ENCODE measurements at regions of chr11 and their contacts with region 1.

Region 1: GRCh38 chr11:59053387-59053786 is 32.7 kb upstream of the GLYATL1B start:
- DNase-seq: peak; percentile 68 to 88 (median 76)
- ATAC-seq: peak; percentile 68
- H3K4me3 ChIP-seq: no peak overlapping the region
- H3K4me3 Mint-ChIP-seq: no peak overlapping the region
- H3K27ac ChIP-seq: no peak overlapping the region
- H3K27ac Mint-ChIP-seq: no peak overlapping the region
- H3K4me1 ChIP-seq: peaks cover 6% of the 10 kb centered on the region
- H3K4me1 Mint-ChIP-seq: peaks cover 7% of the 10 kb centered on the region
- H3K27me3 ChIP-seq: no peaks in the 10 kb centered on the region
- H3K27me3 Mint-ChIP-seq: peaks cover 28% of the 10 kb centered on the region
- CTCF ChIP-seq: peak; percentile 78

Region 2: GRCh38 chr11:58654079-58654907 is 399.1 kb before region 1 on chr11:
- CTCF ChIA-PET with region 1: no interaction called
- POLR2A ChIA-PET with region 1: no interaction called
- intact Hi-C with region 1: loop called in 1 of 2 experiments (anchors 10 kb)
- DNase-seq: peak; percentile 64 to 86 (median 70)
- ATAC-seq: peak; percentile 99
- H3K4me3 ChIP-seq: no peak overlapping the region
- H3K4me3 Mint-ChIP-seq: no peak overlapping the region
- H3K27ac ChIP-seq: no peak overlapping the region
- H3K27ac Mint-ChIP-seq: no peak overlapping the region
- H3K4me1 ChIP-seq: peaks cover 3% of the 10 kb centered on the region
- H3K4me1 Mint-ChIP-seq: peaks cover 7% of the 10 kb centered on the region
- H3K27me3 ChIP-seq: no peaks in the 10 kb centered on the region
- H3K27me3 Mint-ChIP-seq: no peaks in the 10 kb centered on the region
- CTCF ChIP-seq: peak; percentile 96

Region 3: GRCh38 chr11:59106363-59107336 is 53.3 kb after region 1 on chr11 and contains the start of gene FAM111B:
- CTCF ChIA-PET with region 1: interaction called, 3 read pairs
- POLR2A ChIA-PET with region 1: no interaction called
- intact Hi-C with region 1: loop called in 1 of 2 experiments (anchors 5 kb)
- DNase-seq: peak; percentile 16 to 85 (median 48)
- ATAC-seq: peak; percentile 82
- H3K4me3 ChIP-seq: peak within 1 kb of the TSS; percentile 68
- H3K4me3 Mint-ChIP-seq: peak within 1 kb of the TSS; percentile 92
- H3K27ac ChIP-seq: no peak within 1 kb of the TSS
- H3K27ac Mint-ChIP-seq: peak within 1 kb of the TSS; percentile 72
- H3K4me1 ChIP-seq: peaks cover 29% of the 10 kb centered on the region
- H3K4me1 Mint-ChIP-seq: peaks cover 38% of the 10 kb centered on the region
- H3K27me3 ChIP-seq: peaks cover 0 to 7% of the 10 kb centered on the region in 2 experiments
- H3K27me3 Mint-ChIP-seq: peaks cover 31% of the 10 kb centered on the region
- CTCF ChIP-seq: no peak
- total RNA-seq, gene FAM111B: 0.82 to 1.2 TPM

Region 4: GRCh38 chr11:59283825-59284772 is 230.7 kb after region 1 on chr11:
- CTCF ChIA-PET with region 1: no interaction called
- POLR2A ChIA-PET with region 1: no interaction called
- intact Hi-C with region 1: loop called in 1 of 2 experiments (anchors 10 kb)
- DNase-seq: peak in 12 of 14 experiments; percentile 10 to 81 (median 38)
- ATAC-seq: peak; percentile 92
- H3K4me3 ChIP-seq: peak overlapping the region; percentile 4
- H3K4me3 Mint-ChIP-seq: peak overlapping the region; percentile 77
- H3K27ac ChIP-seq: no peak overlapping the region
- H3K27ac Mint-ChIP-seq: peak overlapping the region; percentile 6
- H3K4me1 ChIP-seq: peaks cover 15% of the 10 kb centered on the region
- H3K4me1 Mint-ChIP-seq: peaks cover 18% of the 10 kb centered on the region
- H3K27me3 ChIP-seq: no peaks in the 10 kb centered on the region
- H3K27me3 Mint-ChIP-seq: peaks cover 5% of the 10 kb centered on the region
- CTCF ChIP-seq: peak; percentile 82

Region 5: DNA sequence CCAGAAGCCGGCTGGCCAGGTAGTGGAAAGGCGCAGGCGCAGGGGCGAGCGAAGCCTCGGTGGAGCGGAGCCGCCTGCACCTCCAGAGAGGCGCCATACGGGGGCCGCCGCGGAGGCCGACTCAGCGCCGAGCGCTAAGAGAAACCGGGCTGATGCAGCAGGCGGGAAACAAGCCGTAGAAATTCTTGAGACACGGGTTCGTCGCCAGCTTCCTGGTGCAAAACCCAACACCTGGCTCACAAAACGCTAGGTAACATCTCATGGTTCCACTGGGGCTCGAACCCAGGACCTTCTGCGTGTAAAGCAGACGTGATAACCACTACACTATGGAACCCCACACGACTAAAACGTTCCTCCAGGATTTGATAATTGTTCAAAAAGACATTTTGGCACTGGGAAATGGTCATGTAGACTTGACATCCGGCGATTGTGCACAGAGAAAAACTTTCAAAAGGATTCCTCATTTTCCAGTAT is 497.0 kb after region 1 on chr11:
- CTCF ChIA-PET with region 1: no interaction called
- POLR2A ChIA-PET with region 1: no interaction called
- intact Hi-C with region 1: no loop called
- DNase-seq: peak; percentile 71 to 94 (median 82)
- ATAC-seq: peak; percentile 81
- H3K4me3 ChIP-seq: peak overlapping the region; percentile 57
- H3K4me3 Mint-ChIP-seq: peak overlapping the region; percentile 94
- H3K27ac ChIP-seq: peak overlapping the region; percentile 35 to 37
- H3K27ac Mint-ChIP-seq: peak overlapping the region; percentile 99
- H3K4me1 ChIP-seq: peaks cover 15% of the 10 kb centered on the region
- H3K4me1 Mint-ChIP-seq: peaks cover 33% of the 10 kb centered on the region
- H3K27me3 ChIP-seq: no peaks in the 10 kb centered on the region
- H3K27me3 Mint-ChIP-seq: peaks cover 11% of the 10 kb centered on the region
- CTCF ChIP-seq: peak; percentile 60